PC-9 (cell line): ENCODE measurements at regions of chr18 and their contacts with region 1.

Region 1: GRCh38 chr18:49510393-49511115 is 23.5 kb upstream of the C18orf32 start:
- DNase-seq: peak in 1 of 2 experiments; percentile 42
- H3K4me3 ChIP-seq: no peak overlapping the region
- H3K27ac ChIP-seq: no peak overlapping the region
- H3K4me1 ChIP-seq: no peaks in the 10 kb centered on the region
- H3K27me3 ChIP-seq: no peaks in the 10 kb centered on the region
- CTCF ChIP-seq: peak; percentile 91

Region 2: DNA sequence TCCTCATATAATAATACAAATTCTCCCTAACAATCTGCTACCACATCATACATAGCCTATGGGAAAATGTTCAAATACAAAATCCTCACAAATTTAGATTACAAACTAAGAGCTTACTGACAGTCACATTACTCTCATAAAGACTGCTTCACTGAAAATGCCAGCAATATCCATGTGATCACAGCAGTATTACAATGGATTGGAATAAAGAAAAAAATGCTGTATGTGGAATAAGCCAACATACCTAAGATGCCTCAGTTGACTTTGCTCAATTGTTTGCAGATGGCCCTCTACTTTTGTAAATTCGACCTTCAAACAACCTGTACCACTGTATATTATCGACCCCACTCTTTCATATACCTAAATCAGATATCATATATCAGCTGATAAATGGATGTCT is 138.8 kb before region 1 on chr18:
- CTCF ChIA-PET with region 1: no interaction called
- POLR2A ChIA-PET with region 1: no interaction called
- intact Hi-C with region 1: no loop called
- DNase-seq: no peak
- H3K4me3 ChIP-seq: no peak overlapping the region
- H3K27ac ChIP-seq: no peak overlapping the region
- H3K4me1 ChIP-seq: no peaks in the 10 kb centered on the region
- H3K27me3 ChIP-seq: no peaks in the 10 kb centered on the region
- CTCF ChIP-seq: no peak

Region 3: DNA sequence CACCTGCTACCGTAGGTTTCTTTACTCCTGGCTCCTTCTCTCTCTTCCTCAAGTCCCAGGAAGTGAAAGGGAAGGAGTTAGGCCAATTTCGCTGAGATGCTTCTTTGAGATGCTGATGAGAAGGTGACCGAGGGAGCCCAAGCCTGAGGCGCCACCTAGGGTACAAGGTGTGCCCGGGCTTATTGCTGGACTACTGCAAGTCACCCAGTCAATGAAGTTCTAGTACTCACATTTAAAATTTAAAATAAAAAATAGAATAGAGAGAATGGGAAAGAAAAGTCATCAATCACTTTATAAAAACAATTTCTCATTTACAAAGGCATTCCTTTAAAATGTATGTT is 257.5 kb after region 1 on chr18:
- CTCF ChIA-PET with region 1: no interaction called
- POLR2A ChIA-PET with region 1: no interaction called
- intact Hi-C with region 1: loop called (anchors 1 kb)
- DNase-seq: peak; percentile 63 to 64
- H3K4me3 ChIP-seq: no peak overlapping the region
- H3K27ac ChIP-seq: no peak overlapping the region
- H3K4me1 ChIP-seq: no peaks in the 10 kb centered on the region
- H3K27me3 ChIP-seq: no peaks in the 10 kb centered on the region
- CTCF ChIP-seq: peak; percentile 89

Region 4: DNA sequence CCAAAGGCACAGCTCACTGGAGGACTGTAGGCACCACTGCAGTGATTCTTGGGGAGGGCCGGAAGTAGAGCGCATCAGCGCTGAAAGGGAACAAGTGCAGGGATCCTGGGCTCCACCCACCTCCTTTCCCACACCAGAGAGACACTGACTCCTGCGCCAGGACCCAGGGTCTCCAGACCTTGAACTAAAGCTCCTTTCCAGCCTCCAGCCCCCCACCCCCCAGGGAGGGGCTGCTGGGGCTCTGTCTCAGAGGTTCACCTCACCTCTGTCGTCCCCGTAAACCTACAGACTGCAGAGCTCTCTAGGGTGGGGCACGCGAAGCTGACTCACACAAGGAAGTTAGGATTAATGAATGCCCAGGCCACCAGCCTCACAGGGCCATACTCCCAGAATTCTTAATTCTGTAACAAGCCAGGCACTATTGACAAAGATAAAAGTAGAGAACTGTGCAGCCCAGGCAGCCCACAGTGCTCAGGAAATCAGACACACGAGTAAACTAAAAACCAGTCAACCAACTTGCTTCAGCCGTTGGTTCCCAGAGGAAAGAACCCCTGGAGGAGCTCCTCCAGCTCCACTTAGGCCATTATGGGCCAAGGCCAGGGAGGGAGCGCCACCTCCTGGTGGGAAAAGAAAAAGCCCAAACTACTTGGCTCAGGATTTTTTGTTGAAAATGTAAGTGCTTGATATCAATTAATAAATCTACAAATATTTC is 347.9 kb after region 1 on chr18:
- CTCF ChIA-PET with region 1: interaction called, 9 read pairs
- POLR2A ChIA-PET with region 1: no interaction called
- intact Hi-C with region 1: loop called (anchors 1 kb)
- DNase-seq: peak; percentile 66
- H3K4me3 ChIP-seq: no peak overlapping the region
- H3K27ac ChIP-seq: no peak overlapping the region
- H3K4me1 ChIP-seq: peaks cover 11% of the 10 kb centered on the region
- H3K27me3 ChIP-seq: no peaks in the 10 kb centered on the region
- CTCF ChIP-seq: peak; percentile 95